Lower leg skin (tissue), 4 donors: ENCODE measurements at regions of chr12 and their contacts with region 1.

Region 1: GRCh38 chr12:28780096-28780495 is 369.0 kb upstream of the FAR2 start:
- DNase-seq: peak in 1 of 2 donors; percentile 47
- H3K4me3 ChIP-seq: no peak overlapping the region
- CTCF ChIP-seq: no peak
- POLR2A ChIP-seq: no peak

Region 2: DNA sequence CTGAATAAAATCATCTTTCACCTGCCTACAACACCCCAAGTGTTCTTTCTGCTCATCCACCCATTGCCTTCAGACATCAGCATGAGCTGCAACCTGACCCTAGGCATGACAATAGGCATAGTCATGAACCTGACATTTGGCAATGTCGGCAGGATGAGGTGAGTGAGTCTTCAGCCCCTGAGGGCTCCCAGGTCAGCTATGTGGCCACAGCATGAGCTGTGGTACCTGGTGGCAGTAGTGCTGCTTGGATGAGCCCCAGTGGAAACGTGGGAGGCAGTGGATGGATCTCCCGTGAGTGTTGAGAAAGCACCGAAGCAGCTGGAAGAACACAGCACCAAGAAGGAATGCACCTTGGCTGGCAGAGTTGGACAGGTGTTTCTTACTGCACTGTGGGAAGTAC is 34.1 kb after region 1 on chr12:
- intact Hi-C with region 1: loop called (anchors 1 kb)
- DNase-seq: no peak
- H3K4me3 ChIP-seq: no peak overlapping the region
- CTCF ChIP-seq: no peak
- POLR2A ChIP-seq: no peak